CD4-positive, alpha-beta memory T cell (primary cell): ENCODE measurements at regions of chr6 and their contacts with region 1.

Region 1: GRCh38 chr6:73732845-73733675 is 37.1 kb downstream of the CD109 start:
- DNase-seq: peak; percentile 48 to 63 (median 57)
- H3K4me3 ChIP-seq: no peak overlapping the region
- H3K4me3 Mint-ChIP-seq: no peak overlapping the region
- H3K27ac ChIP-seq: no peak overlapping the region
- H3K27ac Mint-ChIP-seq: peak overlapping the region in 1 of 7 donors; percentile 4
- H3K4me1 ChIP-seq: no peaks in the 10 kb centered on the region
- H3K4me1 Mint-ChIP-seq: no peaks in the 10 kb centered on the region
- H3K27me3 ChIP-seq: no peaks in the 10 kb centered on the region
- H3K27me3 Mint-ChIP-seq: peaks cover 3% of the 10 kb centered on the region in 2 donors

Region 2: GRCh38 chr6:72922401-72922800 is 810.7 kb before region 1 on chr6:
- CTCF ChIA-PET with region 1: no interaction called
- POLR2A ChIA-PET with region 1: no interaction called
- intact Hi-C with region 1: no loop called
- DNase-seq: no peak
- H3K4me3 ChIP-seq: no peak overlapping the region
- H3K4me3 Mint-ChIP-seq: no peak overlapping the region
- H3K27ac ChIP-seq: no peak overlapping the region
- H3K27ac Mint-ChIP-seq: no peak overlapping the region
- H3K4me1 ChIP-seq: no peaks in the 10 kb centered on the region
- H3K4me1 Mint-ChIP-seq: no peaks in the 10 kb centered on the region
- H3K27me3 ChIP-seq: no peaks in the 10 kb centered on the region
- H3K27me3 Mint-ChIP-seq: no peaks in the 10 kb centered on the region

Region 3: GRCh38 chr6:73747289-73747688 is 14.2 kb after region 1 on chr6:
- CTCF ChIA-PET with region 1: interaction called, 19 read pairs
- POLR2A ChIA-PET with region 1: no interaction called
- intact Hi-C with region 1: no loop called
- DNase-seq: no peak
- H3K4me3 ChIP-seq: no peak overlapping the region
- H3K4me3 Mint-ChIP-seq: no peak overlapping the region
- H3K27ac ChIP-seq: no peak overlapping the region
- H3K27ac Mint-ChIP-seq: no peak overlapping the region
- H3K4me1 ChIP-seq: no peaks in the 10 kb centered on the region
- H3K4me1 Mint-ChIP-seq: no peaks in the 10 kb centered on the region
- H3K27me3 ChIP-seq: no peaks in the 10 kb centered on the region
- H3K27me3 Mint-ChIP-seq: no peaks in the 10 kb centered on the region